A549 (cell line): ENCODE measurements at regions of chr10 and their contacts with region 1.

Region 1: GRCh38 chr10:61606951-61607907 is 55.5 kb upstream of the CABCOCO1 start:
- DNase-seq: peak in 1 of 2 experiments; percentile 35
- ATAC-seq: peak in 1 of 2 experiments; percentile 68; a peak in 3 of 6 replicates
- H3K4me3 ChIP-seq: no peak overlapping the region
- H3K27ac ChIP-seq: no peak overlapping the region
- H3K4me1 ChIP-seq: no peaks in the 10 kb centered on the region
- CTCF ChIP-seq: peak; percentile 49
- EP300 ChIP-seq: no peak
- POLR2A ChIP-seq: no peak
- RAD21 ChIP-seq: peak; percentile 34 to 47; a peak in 4 of 5 replicates

Region 2: GRCh38 chr10:61588770-61589211 is 18.4 kb before region 1 on chr10:
- CTCF ChIA-PET with region 1: interaction called, 11 read pairs
- POLR2A ChIA-PET with region 1: no interaction called
- DNase-seq: peak in 1 of 2 experiments; percentile 7
- ATAC-seq: no peak
- H3K4me3 ChIP-seq: no peak overlapping the region
- H3K27ac ChIP-seq: no peak overlapping the region
- H3K4me1 ChIP-seq: no peaks in the 10 kb centered on the region; the same call in 2 of the 3 replicates
- CTCF ChIP-seq: no peak
- EP300 ChIP-seq: no peak
- POLR2A ChIP-seq: no peak
- RAD21 ChIP-seq: no peak

Region 3: GRCh38 chr10:61632057-61632670 is 24.9 kb after region 1 on chr10:
- CTCF ChIA-PET with region 1: interaction called, 10 read pairs
- POLR2A ChIA-PET with region 1: no interaction called
- DNase-seq: peak in 1 of 2 experiments; percentile 20
- ATAC-seq: no peak
- H3K4me3 ChIP-seq: no peak overlapping the region
- H3K27ac ChIP-seq: peak overlapping the region; percentile 67 to 80; a peak in 4 of 6 replicates
- H3K4me1 ChIP-seq: peaks cover 67% of the 10 kb centered on the region
- CTCF ChIP-seq: no peak
- EP300 ChIP-seq: no peak
- POLR2A ChIP-seq: no peak
- RAD21 ChIP-seq: no peak